GM10248 (cell line): ENCODE measurements at regions of chr1 and their contacts with region 1.

Region 1: GRCh38 chr1:40315239-40315794 is 1.8 kb downstream of the COL9A2 start:
- DNase-seq: peak; percentile 88
- CTCF ChIP-seq: peak; percentile 90

Region 2: DNA sequence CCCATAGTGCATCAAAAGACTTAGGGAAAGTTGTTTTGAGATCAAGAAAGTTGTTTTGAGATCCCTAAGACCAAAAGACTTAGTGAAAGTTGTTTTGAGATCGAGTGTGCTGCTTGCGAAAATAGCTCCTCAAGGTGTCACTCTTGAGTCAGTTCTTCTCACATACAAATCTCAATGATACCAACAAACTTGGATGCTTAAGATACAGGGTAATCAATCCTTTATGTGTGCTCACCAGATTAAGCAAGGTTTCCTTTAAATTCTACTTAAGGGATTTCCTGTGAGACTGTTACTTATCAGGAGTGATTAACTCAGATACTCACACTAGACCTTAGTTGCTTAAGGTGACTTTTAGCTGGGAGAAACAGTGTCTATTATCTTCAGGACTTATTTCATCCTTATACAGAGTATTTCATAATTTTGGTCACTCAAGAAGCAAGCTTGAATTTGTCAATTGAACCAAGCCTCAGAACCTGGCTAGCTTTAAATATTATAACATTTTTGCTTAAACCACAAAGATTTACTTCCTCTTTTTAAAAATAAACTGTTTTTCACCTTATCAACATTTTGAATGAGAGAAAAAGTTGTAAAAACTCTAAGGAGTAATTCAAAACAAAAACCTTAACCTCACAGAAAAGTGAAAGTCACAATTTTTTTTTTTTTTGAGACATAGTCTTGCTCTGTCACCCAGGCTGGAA is 162.1 kb before region 1 on chr1:
- CTCF ChIA-PET with region 1: interaction called, 70 read pairs
- POLR2A ChIA-PET with region 1: no interaction called
- DNase-seq: peak; percentile 35
- CTCF ChIP-seq: peak; percentile 74

Region 3: GRCh38 chr1:40281853-40282252 is 33.5 kb before region 1 on chr1:
- CTCF ChIA-PET with region 1: interaction called, 11 read pairs
- POLR2A ChIA-PET with region 1: no interaction called
- DNase-seq: no peak
- CTCF ChIP-seq: no peak

Region 4: GRCh38 chr1:40299366-40300248 is 15.7 kb before region 1 on chr1:
- CTCF ChIA-PET with region 1: interaction called, 16 read pairs
- POLR2A ChIA-PET with region 1: no interaction called
- DNase-seq: no peak
- CTCF ChIP-seq: no peak

Region 5: GRCh38 chr1:40393173-40393572 is 77.9 kb after region 1 on chr1:
- CTCF ChIA-PET with region 1: interaction called, 3 read pairs
- POLR2A ChIA-PET with region 1: interaction called, 12 read pairs
- DNase-seq: no peak
- CTCF ChIP-seq: no peak

Region 6: DNA sequence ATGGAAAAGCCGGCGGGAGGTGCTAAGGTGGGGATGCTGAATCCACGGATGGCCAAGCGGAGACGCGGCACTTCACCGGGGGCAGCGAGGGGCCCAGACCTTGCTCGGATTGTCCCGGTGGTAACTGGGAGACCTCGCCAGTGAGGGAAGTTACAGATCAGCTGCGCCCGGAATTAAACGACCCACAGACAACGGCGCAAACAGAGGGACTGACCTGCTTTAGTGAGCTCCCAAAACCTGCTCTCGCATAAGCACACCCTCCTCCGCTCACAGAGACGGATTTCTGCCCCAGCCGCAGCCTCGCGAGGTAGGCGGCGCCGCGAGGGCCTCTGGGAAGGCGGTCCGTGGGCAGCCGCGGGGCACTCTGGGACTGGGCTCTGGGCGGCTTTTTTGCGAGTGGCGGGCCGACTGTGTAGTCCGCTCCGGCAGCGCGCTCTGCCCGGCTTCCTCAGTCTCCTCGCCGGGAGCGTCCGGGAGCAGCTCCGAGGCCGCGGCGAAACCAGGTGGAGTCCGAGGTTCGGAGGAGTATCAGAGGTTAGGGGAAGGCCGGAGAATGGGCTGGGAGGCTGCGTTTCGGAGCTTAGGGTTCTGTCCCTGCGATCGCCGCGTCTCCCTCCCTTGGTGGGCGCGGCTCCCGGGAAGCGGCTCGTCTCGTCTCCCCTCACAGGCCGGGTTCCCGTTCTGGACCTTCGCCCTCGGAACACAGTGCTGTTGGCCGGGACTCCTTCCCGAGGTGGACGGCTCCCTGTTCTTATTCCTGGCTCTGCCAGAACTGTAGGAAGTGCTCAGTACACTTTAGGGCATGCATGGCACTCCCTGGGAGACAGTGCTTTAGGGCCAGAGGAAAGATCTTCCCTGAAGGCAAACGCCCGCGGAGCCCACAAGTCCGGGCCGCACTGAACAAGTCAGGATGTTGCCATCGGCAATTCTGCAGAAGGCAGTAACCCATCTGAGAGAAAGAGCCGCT is 193.3 kb after region 1 on chr1 and contains the start of gene EXO5:
- CTCF ChIA-PET with region 1: no interaction called
- POLR2A ChIA-PET with region 1: no interaction called
- DNase-seq: peak; percentile 90
- CTCF ChIP-seq: no peak

Region 7: DNA sequence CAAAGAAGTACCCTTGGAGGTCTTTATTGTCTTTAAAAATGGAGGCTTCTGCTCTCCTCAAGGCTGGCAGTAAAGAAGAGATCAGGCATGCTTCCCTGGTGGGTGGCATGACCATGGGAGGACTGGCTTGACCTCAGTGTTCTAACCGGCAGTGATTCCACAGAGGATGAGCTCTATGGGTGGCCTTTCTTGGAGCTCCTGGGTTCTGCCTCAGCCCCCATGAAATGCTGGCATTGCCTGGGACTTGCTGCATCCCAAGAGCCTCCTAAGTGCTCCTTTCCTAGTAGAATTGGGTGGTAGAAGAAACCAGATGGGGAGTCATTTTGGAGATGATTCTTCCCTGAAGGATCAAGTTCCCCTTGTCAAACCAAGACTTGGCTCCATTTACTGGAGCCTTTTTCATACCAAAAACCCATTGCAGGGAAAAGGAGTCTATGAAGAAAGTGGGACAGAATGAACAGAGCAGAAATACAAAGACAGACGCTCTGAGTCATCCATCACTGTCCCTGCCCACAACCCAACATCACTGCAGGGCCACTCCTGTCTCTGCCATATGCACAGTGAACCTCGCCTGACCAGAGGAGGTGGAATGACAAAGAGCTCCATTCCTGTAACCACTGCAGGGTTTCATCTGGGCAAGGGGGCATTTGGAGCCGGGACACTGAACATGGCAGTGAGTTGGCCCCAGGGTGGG is 307.8 kb after region 1 on chr1:
- CTCF ChIA-PET with region 1: no interaction called
- POLR2A ChIA-PET with region 1: no interaction called
- DNase-seq: no peak
- CTCF ChIP-seq: no peak